GM12878 (cell line): ENCODE measurements at regions of chrX and their contacts with region 1.

Region 1: GRCh38 chrX:81195712-81196111 is 6.0 kb downstream of the HMGN5 start:
- DNase-seq: no peak
- ATAC-seq: peak; percentile 99
- H3K4me3 ChIP-seq: no peak overlapping the region
- H3K27ac ChIP-seq: no peak overlapping the region
- H3K4me1 ChIP-seq: no peaks in the 10 kb centered on the region
- H3K27me3 ChIP-seq: no peaks in the 10 kb centered on the region
- CTCF ChIP-seq: peak; percentile 64 to 77 (median 75)
- EP300 ChIP-seq: no peak
- POLR2A ChIP-seq: no peak
- RAD21 ChIP-seq: peak; percentile 70

Region 2: GRCh38 chrX:80876877-80877276 is 318.8 kb before region 1 on chrX:
- CTCF ChIA-PET with region 1: interaction called, 12 read pairs
- POLR2A ChIA-PET with region 1: no interaction called
- RAD21 ChIA-PET with region 1: interaction called, 9 read pairs
- SMC1A ChIA-PET with region 1: interaction called, 4 read pairs
- in situ Hi-C with region 1: loop called (anchors 5 kb)
- intact Hi-C with region 1: loop called (anchors 1 kb)
- DNase-seq: peak; percentile 1
- ATAC-seq: 0 out of 3 replicates have a peak, but pooled peaks have one; percentile 37
- H3K4me3 ChIP-seq: no peak overlapping the region
- H3K27ac ChIP-seq: no peak overlapping the region
- H3K4me1 ChIP-seq: no peaks in the 10 kb centered on the region
- H3K27me3 ChIP-seq: no peaks in the 10 kb centered on the region
- CTCF ChIP-seq: peak; percentile 30 to 49 (median 36); a peak in 4 of 6 replicates
- EP300 ChIP-seq: no peak
- POLR2A ChIP-seq: no peak
- RAD21 ChIP-seq: peak; percentile 65